ENCODE measurements at regions of chr5 and their contacts with region 1.

Region 1: DNA sequence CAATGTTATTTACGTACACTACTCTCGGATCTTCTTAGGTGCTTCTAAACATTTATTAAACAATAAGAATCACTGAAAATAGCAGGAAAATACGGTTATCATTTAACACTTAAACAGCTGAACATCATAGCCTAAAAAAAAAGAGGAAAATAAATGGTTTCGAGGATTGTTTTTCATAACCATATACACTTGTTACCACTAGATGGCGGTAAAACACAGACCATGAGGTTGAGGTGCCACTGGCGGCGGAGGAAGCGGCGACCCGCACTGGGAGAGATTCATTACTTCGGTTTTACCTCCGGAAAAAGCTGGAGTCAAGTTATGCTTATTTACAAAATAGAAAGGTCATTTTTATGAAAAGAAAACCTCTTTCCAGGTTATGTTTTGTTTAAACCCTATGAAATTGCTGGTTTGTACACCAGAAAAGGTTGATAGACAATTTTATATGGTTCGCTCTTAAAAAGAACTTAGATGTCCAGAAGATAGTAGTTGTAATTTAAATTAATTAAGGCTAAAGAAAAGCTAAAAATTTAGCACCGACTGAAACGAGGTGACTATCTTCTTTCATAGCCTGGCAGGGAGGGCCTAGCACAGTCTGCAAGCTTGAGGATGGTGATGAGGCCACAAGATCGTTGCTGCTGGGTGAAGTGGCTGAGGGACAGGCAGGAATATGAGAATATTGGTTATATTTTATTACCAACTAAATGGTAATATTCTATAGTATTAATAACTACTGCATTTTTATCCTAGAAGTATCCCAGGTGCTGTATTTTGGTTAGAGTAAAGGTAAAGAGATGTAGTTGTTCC is 605.7 kb downstream of the RAB3C start:
- DNase-seq: peak; percentile 32
- H3K4me3 Mint-ChIP-seq: no peak overlapping the region
- H3K27ac Mint-ChIP-seq: no peak overlapping the region
- H3K4me1 Mint-ChIP-seq: peaks cover 7% of the 10 kb centered on the region
- H3K27me3 Mint-ChIP-seq: peaks cover 27% of the 10 kb centered on the region

Region 2: GRCh38 chr5:59238126-59238902 is 49.7 kb after region 1 on chr5:
- intact Hi-C with region 1: no loop called
- DNase-seq: no peak
- H3K4me3 Mint-ChIP-seq: no peak overlapping the region
- H3K27ac Mint-ChIP-seq: no peak overlapping the region
- H3K4me1 Mint-ChIP-seq: peaks cover 18% of the 10 kb centered on the region
- H3K27me3 Mint-ChIP-seq: peaks cover 61% of the 10 kb centered on the region

Region 3: GRCh38 chr5:59264639-59265240 is 76.1 kb after region 1 on chr5:
- intact Hi-C with region 1: no loop called
- DNase-seq: no peak
- H3K4me3 Mint-ChIP-seq: no peak overlapping the region
- H3K27ac Mint-ChIP-seq: no peak overlapping the region
- H3K4me1 Mint-ChIP-seq: no peaks in the 10 kb centered on the region
- H3K27me3 Mint-ChIP-seq: peaks cover 18% of the 10 kb centered on the region

Region 4: DNA sequence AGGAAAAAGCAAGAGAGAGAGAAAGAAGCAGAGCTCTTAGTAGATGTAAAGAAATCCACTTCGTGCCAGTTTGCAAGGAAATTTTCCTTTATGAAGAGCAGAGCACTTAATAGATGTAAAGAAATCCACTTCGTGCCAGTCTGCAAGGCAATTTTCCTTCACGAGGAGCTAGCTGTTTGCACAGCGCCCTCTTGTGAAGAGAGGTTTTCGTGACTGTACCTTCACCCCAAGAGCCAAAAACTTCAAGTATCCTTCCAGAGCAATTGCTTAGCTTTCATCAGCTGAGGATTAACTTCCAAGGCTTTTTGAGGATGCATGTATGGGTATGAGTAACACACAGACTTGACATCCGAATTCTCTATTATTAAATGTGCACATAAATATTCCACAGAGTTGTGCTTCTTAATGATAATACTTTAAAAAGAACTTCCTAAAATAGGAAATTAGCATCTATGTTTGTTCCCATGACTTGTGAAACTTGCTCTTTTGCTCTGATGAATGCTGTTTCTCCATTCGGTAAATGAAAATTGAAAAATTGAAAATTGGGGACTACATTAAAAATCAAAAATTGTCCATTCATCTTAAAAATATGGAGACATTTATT is 179.3 kb after region 1 on chr5:
- intact Hi-C with region 1: loop called (anchors 1 kb)
- DNase-seq: no peak
- H3K4me3 Mint-ChIP-seq: no peak overlapping the region
- H3K27ac Mint-ChIP-seq: no peak overlapping the region
- H3K4me1 Mint-ChIP-seq: no peaks in the 10 kb centered on the region
- H3K27me3 Mint-ChIP-seq: peaks cover 27% of the 10 kb centered on the region

Region 5: DNA sequence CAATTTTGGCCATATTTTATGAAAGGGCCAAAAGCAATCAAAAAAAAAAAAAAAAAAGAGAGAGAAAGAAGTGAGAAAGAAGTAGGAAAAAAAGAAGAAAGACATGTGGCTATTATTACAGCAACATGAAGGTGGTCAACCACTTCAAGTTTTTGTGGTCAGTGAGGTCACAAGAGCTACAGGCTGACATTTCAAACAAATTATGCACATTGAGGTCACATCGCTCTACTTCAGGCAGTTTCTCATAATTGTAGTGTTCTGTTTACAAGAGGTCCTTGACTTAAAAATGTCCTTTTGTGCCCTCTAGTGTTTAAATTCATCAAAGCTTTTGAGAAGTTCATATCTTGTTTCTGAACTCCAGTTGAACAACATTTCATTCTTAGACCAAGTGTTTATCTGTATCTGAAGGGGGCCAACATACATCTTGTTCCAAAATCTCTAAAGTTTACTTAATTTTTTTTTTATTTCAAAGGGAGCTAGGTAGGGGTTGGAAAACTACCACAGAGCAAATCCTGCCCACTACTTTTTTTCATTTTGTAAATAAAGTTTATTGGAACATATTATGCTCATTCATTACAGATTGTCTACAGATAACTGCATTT is 191.8 kb after region 1 on chr5:
- intact Hi-C with region 1: loop called (anchors 1 kb)
- DNase-seq: no peak
- H3K4me3 Mint-ChIP-seq: no peak overlapping the region
- H3K27ac Mint-ChIP-seq: no peak overlapping the region
- H3K4me1 Mint-ChIP-seq: peaks cover 4% of the 10 kb centered on the region
- H3K27me3 Mint-ChIP-seq: peaks cover 10% of the 10 kb centered on the region

Region 6: DNA sequence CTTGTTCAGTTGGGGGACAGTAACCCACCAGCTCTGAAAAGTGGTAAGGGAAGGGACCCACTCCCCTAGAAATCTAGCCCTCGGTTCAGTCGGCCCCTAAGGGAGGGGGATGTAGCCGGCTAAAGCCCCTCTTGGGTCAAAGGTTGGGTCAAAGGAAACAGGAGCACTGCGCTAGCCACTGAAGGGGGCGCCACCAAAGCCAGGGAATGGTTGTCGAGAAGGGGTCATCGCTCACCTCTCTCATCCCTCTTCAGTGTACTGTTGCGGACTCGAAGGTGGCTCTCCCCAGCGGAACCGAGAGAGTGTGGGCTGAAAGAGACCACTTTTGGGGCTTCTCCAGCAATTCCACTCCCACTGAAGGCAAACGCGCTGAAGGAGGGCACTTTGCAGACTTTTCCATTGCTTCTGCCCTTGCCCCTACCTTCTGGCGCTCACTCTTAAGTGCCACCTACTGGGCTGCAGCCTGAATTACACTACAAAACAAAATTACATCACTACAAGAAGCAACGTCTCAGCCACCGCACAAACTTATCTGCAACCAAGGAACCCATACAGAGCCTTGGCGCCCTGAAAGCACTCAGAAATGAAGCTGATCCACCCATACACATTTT is 308.0 kb after region 1 on chr5:
- intact Hi-C with region 1: loop called (anchors 2 kb)
- DNase-seq: no peak
- H3K4me3 Mint-ChIP-seq: no peak overlapping the region
- H3K27ac Mint-ChIP-seq: no peak overlapping the region
- H3K4me1 Mint-ChIP-seq: peaks cover 5% of the 10 kb centered on the region
- H3K27me3 Mint-ChIP-seq: peaks cover 24% of the 10 kb centered on the region

Region 7: DNA sequence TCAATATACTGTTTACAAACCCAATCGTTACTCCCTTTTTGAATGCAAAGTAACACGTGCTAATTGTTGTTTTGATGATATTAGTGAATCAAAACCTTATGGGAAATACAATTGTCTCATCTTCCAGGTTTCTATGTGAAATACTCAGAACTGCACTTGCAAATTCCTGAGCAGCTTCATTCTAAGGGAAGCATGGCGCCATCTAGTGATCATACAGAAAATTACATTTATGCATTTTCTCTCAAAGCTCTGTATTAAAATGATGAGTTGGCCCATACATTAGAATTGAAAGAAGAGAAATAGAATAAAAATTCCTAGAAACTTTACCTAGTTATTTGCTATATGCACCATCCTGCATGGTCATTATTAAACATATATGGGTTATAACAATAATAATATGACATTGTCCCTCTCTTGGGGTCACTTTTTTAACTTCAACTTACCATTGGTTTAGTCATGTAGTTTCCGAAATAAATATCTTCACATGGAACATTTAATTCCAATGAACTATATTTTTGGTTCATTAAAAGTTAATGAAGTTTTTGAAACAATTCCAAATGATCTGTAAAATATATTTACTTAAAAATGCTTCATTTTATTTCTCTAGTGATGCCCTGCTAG is 484.9 kb after region 1 on chr5:
- intact Hi-C with region 1: loop called (anchors 2 kb)
- DNase-seq: no peak
- H3K4me3 Mint-ChIP-seq: no peak overlapping the region
- H3K27ac Mint-ChIP-seq: no peak overlapping the region
- H3K4me1 Mint-ChIP-seq: peaks cover 4% of the 10 kb centered on the region
- H3K27me3 Mint-ChIP-seq: peaks cover 6% of the 10 kb centered on the region